Mammary epithelial cell (primary cell): ENCODE measurements at regions of chr1 and their contacts with region 1.

Region 1: DNA sequence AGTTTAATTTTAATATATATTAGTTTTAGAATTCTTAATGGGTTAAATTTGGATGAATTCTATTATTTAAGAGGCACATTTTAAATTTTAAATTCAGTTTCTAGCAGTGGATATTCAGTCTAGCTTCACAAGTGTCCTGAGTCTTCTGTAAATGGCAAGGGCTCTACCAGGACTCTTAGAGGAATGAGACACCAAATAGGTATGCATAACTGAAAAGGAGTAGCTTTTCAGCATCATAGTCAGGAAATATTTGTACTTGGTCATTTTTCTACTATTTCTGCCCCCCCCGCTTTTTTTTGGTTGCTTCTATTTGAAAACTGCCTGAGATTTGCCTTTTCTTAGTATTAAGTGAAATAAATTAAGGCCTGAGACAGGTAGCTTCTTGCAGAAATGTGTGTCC is 80.2 kb downstream of the MAST2 start:
- DNase-seq: no peak
- H3K4me3 ChIP-seq: no peak overlapping the region
- H3K27ac ChIP-seq: no peak overlapping the region
- H3K4me1 ChIP-seq: peaks cover 5% of the 10 kb centered on the region
- H3K27me3 ChIP-seq: no peaks in the 10 kb centered on the region
- CTCF ChIP-seq: no peak

Region 2: DNA sequence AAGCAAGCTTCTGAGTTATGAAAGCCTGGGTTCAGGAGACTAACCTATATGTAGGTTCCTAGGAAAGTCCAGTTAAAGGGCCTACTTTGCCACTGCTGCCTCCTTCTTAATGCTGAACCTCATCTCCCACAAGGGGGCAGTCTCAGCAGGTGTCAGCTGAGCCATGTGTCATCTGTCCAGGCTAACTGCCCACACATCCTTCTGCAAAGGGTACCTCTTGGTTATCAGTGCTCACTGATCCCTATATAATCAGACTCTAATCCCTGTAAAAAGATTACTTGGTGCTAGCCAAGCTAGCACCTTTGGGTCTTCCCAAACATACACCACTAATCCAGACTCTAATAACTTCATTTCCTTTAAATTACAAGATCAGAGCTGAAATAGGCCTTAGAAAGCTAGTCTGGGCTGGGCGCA is 371.0 kb before region 1 on chr1:
- CTCF ChIA-PET with region 1: no interaction called
- dilution Hi-C with region 1: no loop called
- in situ Hi-C with region 1: no loop called
- intact Hi-C with region 1: loop called (anchors 2 kb)
- DNase-seq: peak; percentile 48
- H3K4me3 ChIP-seq: no peak overlapping the region
- H3K27ac ChIP-seq: no peak overlapping the region
- H3K4me1 ChIP-seq: no peaks in the 10 kb centered on the region
- H3K27me3 ChIP-seq: no peaks in the 10 kb centered on the region
- CTCF ChIP-seq: peak; percentile 68 to 84

Region 3: GRCh38 chr1:45583666-45584350 is 299.8 kb before region 1 on chr1 and contains the start of gene NASP:
- CTCF ChIA-PET with region 1: no interaction called
- dilution Hi-C with region 1: no loop called
- in situ Hi-C with region 1: no loop called
- intact Hi-C with region 1: loop called (anchors 1 kb)
- DNase-seq: peak; percentile 83
- H3K4me3 ChIP-seq: peak within 1 kb of the TSS; percentile 45 to 97 (median 69)
- H3K27ac ChIP-seq: peak within 1 kb of the TSS; percentile 89
- H3K4me1 ChIP-seq: peaks cover 14% of the 10 kb centered on the region
- H3K27me3 ChIP-seq: no peaks in the 10 kb centered on the region
- CTCF ChIP-seq: no peak
- total RNA-seq, gene NASP: 17.2 to 82.2 TPM

Region 4: DNA sequence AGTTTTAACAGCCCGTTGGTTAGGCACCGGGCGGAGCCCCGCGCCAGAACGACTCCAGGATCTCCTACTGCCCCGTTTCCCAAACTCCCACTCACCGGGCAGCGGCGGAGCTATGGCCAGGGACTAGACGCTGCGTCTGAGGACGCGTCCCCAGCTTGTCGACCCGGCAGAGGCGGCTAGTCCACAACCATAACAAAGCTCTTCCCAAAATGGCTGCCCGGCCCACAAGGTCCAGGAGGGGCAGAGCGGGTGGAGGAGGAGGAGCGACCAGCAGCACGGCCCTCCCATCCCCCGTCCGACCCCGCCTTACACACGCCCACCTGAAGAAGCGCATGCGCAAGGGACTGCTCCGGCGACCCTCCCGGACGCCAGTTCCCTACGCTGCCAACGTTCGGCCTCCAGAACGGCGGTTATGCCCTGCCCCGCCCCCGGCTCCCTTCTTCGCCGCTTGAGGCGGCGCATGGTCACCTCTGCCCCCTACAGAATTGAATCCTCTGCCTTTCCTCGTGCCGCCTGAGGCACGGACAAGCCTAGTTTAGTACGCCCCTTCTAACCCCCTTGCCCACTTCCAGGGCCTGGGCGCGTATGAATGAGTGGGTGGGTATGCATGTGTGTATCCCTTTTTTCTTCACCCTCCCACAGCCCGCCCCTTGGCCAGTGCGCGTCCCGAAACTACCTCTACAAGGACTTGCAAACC is 197.2 kb before region 1 on chr1 and contains the start of gene GPBP1L1:
- CTCF ChIA-PET with region 1: no interaction called
- dilution Hi-C with region 1: no loop called
- in situ Hi-C with region 1: no loop called
- intact Hi-C with region 1: loop called (anchors 1 kb)
- DNase-seq: peak; percentile 93
- H3K4me3 ChIP-seq: peak within 1 kb of the TSS; percentile 94 to 99 (median 97)
- H3K27ac ChIP-seq: peak within 1 kb of the TSS; percentile 93
- H3K4me1 ChIP-seq: peaks cover 9% of the 10 kb centered on the region
- H3K27me3 ChIP-seq: no peaks in the 10 kb centered on the region
- CTCF ChIP-seq: no peak
- total RNA-seq, gene GPBP1L1: 109 to 119 TPM

Region 5: GRCh38 chr1:46132529-46133180 is 249.0 kb after region 1 on chr1 and contains the start of gene PIK3R3:
- CTCF ChIA-PET with region 1: interaction called, 31 read pairs
- dilution Hi-C with region 1: no loop called
- in situ Hi-C with region 1: no loop called
- intact Hi-C with region 1: no loop called
- DNase-seq: peak; percentile 99
- H3K4me3 ChIP-seq: peak within 1 kb of the TSS; percentile 76 to 99 (median 78)
- H3K27ac ChIP-seq: peak within 1 kb of the TSS; percentile 91
- H3K4me1 ChIP-seq: peaks cover 26% of the 10 kb centered on the region
- H3K27me3 ChIP-seq: no peaks in the 10 kb centered on the region
- CTCF ChIP-seq: no peak
- total RNA-seq, gene PIK3R3: 12.8 to 13.8 TPM